ENCODE measurements at regions of chr11 and their contacts with region 1.

Region 1: GRCh38 chr11:58567889-58568512 is 7.7 kb downstream of the LPXN start:
- DNase-seq: peak; percentile 85
- ATAC-seq: peak; percentile 92
- H3K4me3 Mint-ChIP-seq: peak overlapping the region; percentile 32
- H3K27ac Mint-ChIP-seq: peak overlapping the region; percentile 76
- H3K4me1 Mint-ChIP-seq: peaks cover 64% of the 10 kb centered on the region
- H3K27me3 Mint-ChIP-seq: no peaks in the 10 kb centered on the region

Region 2: GRCh38 chr11:58592760-58593472 is 24.9 kb after region 1 on chr11:
- CTCF ChIA-PET with region 1: interaction called, 14 read pairs
- POLR2A ChIA-PET with region 1: interaction called, 14 read pairs
- intact Hi-C with region 1: loop called in 1 of 2 experiments (anchors 1 kb)
- DNase-seq: peak; percentile 78
- ATAC-seq: peak; percentile 91
- H3K4me3 Mint-ChIP-seq: peak overlapping the region; percentile 0
- H3K27ac Mint-ChIP-seq: peak overlapping the region; percentile 84
- H3K4me1 Mint-ChIP-seq: peaks cover 82% of the 10 kb centered on the region
- H3K27me3 Mint-ChIP-seq: no peaks in the 10 kb centered on the region

Region 3: DNA sequence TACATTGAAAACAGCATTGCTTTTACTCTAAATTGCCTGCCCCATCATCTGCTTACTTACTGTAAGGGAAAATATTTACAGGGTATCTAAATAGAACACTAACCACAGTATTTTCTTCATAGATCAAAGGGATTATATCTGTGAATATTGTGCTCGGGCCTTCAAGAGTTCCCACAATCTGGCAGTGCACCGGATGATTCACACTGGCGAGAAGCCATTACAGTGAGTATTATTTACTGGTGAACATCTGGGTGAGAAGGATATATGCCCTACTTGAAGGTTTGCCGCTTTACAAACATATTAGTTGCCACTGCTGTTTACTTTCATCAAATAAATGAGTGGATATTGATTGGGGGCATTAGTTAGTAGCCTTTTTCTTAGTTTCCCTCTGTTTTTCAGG is 48.6 kb after region 1 on chr11:
- CTCF ChIA-PET with region 1: interaction called, 15 read pairs
- POLR2A ChIA-PET with region 1: interaction called, 3 read pairs
- intact Hi-C with region 1: no loop called
- DNase-seq: no peak
- ATAC-seq: no peak
- H3K4me3 Mint-ChIP-seq: no peak overlapping the region
- H3K27ac Mint-ChIP-seq: peak overlapping the region; percentile 13
- H3K4me1 Mint-ChIP-seq: peaks cover 34% of the 10 kb centered on the region
- H3K27me3 Mint-ChIP-seq: no peaks in the 10 kb centered on the region

Region 4: GRCh38 chr11:58629857-58630256 is 61.9 kb after region 1 on chr11:
- CTCF ChIA-PET with region 1: interaction called, 89 read pairs
- POLR2A ChIA-PET with region 1: no interaction called
- intact Hi-C with region 1: loop called in 1 of 2 experiments (anchors 2 kb)
- DNase-seq: peak; percentile 38
- ATAC-seq: no peak
- H3K4me3 Mint-ChIP-seq: no peak overlapping the region
- H3K27ac Mint-ChIP-seq: no peak overlapping the region
- H3K4me1 Mint-ChIP-seq: peaks cover 9% of the 10 kb centered on the region
- H3K27me3 Mint-ChIP-seq: no peaks in the 10 kb centered on the region

Region 5: DNA sequence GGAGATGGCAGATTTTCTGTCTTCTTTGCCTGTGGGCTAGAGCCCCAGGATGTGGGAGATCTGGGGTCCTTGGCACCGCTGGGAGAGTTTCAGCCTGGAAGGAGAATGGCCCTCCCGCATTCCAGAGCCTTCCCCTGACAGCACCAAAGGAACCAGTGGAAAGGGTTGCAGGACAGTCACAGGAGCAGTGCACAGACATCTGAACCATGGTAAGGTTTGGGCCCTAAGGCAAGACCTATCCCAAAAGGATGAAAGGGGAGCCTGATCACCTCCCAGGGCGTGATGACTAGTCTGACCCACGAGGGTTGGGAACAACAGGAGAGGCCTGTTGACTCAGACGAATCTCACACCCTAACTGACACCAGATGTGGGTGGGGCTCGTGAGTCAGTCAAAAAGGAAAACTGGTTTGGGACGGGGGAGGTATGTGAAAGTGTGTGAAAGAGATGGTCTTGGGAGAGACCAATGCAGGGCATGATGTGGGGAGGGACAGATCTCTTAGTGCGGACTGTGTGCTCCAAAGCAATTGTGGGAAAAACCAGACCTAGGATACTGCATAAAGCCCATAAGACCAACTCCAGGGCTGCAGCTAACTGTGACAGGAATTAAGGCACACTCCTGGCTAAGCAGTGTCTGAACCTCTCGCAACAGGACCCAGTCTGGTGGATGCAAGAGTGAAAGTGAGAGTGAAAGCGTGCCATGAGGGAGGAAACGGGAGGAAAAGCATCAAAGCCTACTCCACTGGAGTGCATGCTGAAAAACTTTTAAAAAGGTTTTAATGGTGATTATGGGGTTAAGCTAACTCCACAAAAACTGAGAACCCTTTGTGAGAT is 202.8 kb after region 1 on chr11:
- CTCF ChIA-PET with region 1: no interaction called
- POLR2A ChIA-PET with region 1: no interaction called
- intact Hi-C with region 1: no loop called
- DNase-seq: peak; percentile 16
- ATAC-seq: peak; percentile 36
- H3K4me3 Mint-ChIP-seq: no peak overlapping the region
- H3K27ac Mint-ChIP-seq: no peak overlapping the region
- H3K4me1 Mint-ChIP-seq: peaks cover 5% of the 10 kb centered on the region
- H3K27me3 Mint-ChIP-seq: peaks cover 7% of the 10 kb centered on the region

Region 6: DNA sequence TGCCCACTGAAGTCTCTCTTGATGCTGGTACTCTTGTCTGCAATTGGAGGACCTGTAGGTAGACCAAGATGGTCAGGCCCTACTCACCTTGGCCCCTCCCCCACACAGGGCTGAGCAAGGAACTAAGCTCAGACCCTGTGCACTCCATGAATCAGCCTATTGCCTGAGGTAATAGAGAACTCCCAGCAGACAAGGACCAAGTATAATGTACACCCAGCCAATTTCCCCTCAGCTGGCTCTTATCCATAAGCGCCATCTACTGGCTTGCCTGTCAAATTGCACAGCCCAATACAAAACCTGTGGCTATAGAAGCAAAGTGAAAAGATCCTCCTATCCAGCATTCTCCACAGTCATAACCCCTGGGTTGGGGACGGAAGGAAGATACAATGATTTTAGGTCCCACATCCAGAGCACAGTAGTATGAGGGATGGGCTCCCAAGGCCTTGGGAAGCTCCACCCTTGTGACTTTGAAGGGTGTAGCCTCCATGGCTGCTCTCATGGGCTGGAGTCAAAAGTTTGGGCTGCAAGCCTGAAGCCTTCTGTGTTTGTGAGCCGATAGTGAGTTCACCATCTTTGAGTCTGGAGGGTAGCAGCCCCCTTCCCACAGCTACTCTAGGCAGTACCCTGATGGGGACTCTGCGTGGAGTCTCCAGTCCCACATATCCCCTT is 220.5 kb after region 1 on chr11:
- CTCF ChIA-PET with region 1: interaction called, 4 read pairs
- POLR2A ChIA-PET with region 1: no interaction called
- intact Hi-C with region 1: loop called (anchors 1 to 2 kb)
- DNase-seq: peak; percentile 58
- ATAC-seq: peak; percentile 87
- H3K4me3 Mint-ChIP-seq: no peak overlapping the region
- H3K27ac Mint-ChIP-seq: no peak overlapping the region
- H3K4me1 Mint-ChIP-seq: no peaks in the 10 kb centered on the region
- H3K27me3 Mint-ChIP-seq: peaks cover 4% of the 10 kb centered on the region

Measured in activated CD4-positive, alpha-beta T cell treated with anti-CD3 and anti-CD28 coated beads for 36 hours (primary cell).